PC-3 (cell line): ENCODE measurements at regions of chr2 and their contacts with region 1.

Region 1: GRCh38 chr2:102355526-102356380 is at the start of gene IL18R1:
- DNase-seq: peak; percentile 82
- ATAC-seq: peak; percentile 98
- H3K4me3 ChIP-seq: peak within 1 kb of the TSS; percentile 91
- H3K27ac ChIP-seq: peak within 1 kb of the TSS; percentile 31; the same call in 1 of the 2 replicates
- H3K4me1 ChIP-seq: peaks cover 6% of the 10 kb centered on the region; the same call in 1 of the 2 replicates
- H3K27me3 ChIP-seq: no peaks in the 10 kb centered on the region
- CTCF ChIP-seq: peak; percentile 90
- total RNA-seq, gene IL18R1: 1.2 and 3.6 TPM in 2 replicates

Region 2: GRCh38 chr2:102082571-102083392 is 273.0 kb before region 1 on chr2:
- CTCF ChIA-PET with region 1: no interaction called
- POLR2A ChIA-PET with region 1: no interaction called
- intact Hi-C with region 1: no loop called
- DNase-seq: peak; percentile 56
- ATAC-seq: peak; percentile 31; the same call in 1 of the 2 replicates
- H3K4me3 ChIP-seq: no peak overlapping the region
- H3K27ac ChIP-seq: no peak overlapping the region
- H3K4me1 ChIP-seq: peaks cover 11% of the 10 kb centered on the region
- H3K27me3 ChIP-seq: no peaks in the 10 kb centered on the region
- CTCF ChIP-seq: no peak

Region 3: GRCh38 chr2:102166189-102166845 is 189.4 kb before region 1 on chr2:
- CTCF ChIA-PET with region 1: no interaction called
- POLR2A ChIA-PET with region 1: no interaction called
- intact Hi-C with region 1: loop called (anchors 5 kb)
- DNase-seq: peak; percentile 65
- ATAC-seq: peak; percentile 96
- H3K4me3 ChIP-seq: no peak overlapping the region
- H3K27ac ChIP-seq: 0 out of 2 replicates have a peak overlapping the region, but pooled peaks have one; percentile 6
- H3K4me1 ChIP-seq: peaks cover 15% of the 10 kb centered on the region
- H3K27me3 ChIP-seq: no peaks in the 10 kb centered on the region
- CTCF ChIP-seq: peak; percentile 79

Region 4: DNA sequence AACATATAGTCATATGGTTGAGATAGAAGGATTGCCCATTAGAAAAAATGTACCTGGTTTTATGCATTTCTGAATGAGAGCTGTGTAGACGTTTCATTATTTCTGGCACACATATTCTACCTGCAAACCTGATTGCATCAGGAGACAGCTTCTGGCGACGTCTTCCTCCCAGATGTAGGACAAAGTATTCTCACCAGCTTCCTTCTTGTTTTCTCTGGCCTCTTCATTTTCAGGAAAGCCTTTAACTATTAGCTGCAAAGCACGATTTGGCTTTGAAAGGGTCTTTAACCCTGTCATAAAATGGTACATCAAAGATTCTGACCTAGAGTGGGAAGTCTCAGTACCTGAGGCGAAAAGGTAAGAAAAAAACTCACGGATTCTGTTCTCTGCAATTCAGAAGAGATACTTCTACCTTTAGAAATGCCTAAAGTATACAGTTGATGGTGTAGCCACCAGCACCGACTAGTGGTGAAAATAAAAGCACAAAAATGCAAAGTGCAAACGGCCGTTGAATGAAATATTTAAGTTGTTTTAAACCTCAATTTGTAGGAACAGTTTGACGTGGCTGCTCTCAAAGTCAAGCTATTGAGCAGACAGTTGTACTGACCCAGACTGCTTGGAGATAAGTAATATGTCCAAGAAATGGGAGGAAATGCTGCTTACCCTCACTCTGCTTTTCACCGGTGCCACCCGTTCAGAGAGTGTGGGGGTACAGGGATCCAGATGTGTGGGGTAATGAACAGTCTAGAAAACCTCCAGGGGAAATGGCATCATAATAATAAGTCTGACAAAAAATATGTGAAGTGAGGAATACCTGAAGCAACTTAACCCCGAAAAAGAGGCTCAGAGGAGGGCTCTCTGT is 87.4 kb after region 1 on chr2:
- CTCF ChIA-PET with region 1: no interaction called
- POLR2A ChIA-PET with region 1: no interaction called
- intact Hi-C with region 1: loop called (anchors 1 kb)
- DNase-seq: peak; percentile 72
- ATAC-seq: peak; percentile 81
- H3K4me3 ChIP-seq: peak overlapping the region; percentile 52
- H3K27ac ChIP-seq: no peak overlapping the region
- H3K4me1 ChIP-seq: peaks cover 5% of the 10 kb centered on the region; the same call in 1 of the 2 replicates
- H3K27me3 ChIP-seq: no peaks in the 10 kb centered on the region
- CTCF ChIP-seq: peak; percentile 94